Testis (tissue), 5 donors: ENCODE measurements at regions of chr12 and their contacts with region 1.

Region 1: DNA sequence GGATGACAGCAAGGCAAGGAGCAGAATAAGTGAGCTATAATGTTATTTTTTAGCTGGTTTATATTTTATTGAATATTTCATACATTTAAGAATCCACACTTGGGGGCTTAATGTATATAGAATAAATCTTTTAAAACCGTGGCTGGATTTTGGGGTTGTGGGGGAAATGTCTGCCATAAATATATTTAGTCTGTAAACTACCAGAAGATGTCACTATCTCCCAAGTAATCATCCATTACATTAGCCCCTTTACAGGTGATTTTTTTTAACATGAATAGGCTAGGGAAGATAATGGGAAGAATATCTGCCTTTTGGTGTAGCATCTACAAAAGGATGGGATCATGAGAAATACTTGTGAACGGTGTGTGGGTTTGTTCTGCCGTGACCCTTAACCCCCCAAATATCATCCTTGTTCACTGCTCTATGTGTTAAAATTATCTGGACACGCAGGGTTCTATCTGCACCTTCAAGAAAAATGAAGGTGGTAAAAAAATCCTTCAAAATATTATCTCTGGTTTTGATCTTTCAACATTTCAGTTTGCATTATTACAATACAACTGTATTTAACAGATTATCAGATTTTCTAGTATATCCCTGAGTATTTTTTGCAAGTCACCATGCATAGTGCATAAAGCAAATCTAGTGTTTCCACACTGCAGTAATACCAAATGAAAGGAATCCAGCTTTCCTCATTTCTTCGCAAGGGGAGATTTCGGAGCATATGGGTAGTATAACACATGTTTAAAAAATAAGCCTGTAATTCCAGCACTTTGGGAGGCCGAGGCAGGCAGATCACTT is 8.0 kb upstream of the SLC17A8 start:
- DNase-seq: no peak
- H3K4me3 ChIP-seq: no peak overlapping the region
- H3K27ac ChIP-seq: no peak overlapping the region
- H3K4me1 ChIP-seq: no peaks in the 10 kb centered on the region
- H3K27me3 ChIP-seq: no peaks in the 10 kb centered on the region
- CTCF ChIP-seq: peak in 1 of 3 experiments; percentile 18
- POLR2A ChIP-seq: no peak

Region 2: GRCh38 chr12:100391856-100392255 is 43.0 kb after region 1 on chr12:
- intact Hi-C with region 1: no loop called
- DNase-seq: no peak
- H3K4me3 ChIP-seq: no peak overlapping the region
- H3K27ac ChIP-seq: no peak overlapping the region
- H3K4me1 ChIP-seq: no peaks in the 10 kb centered on the region
- H3K27me3 ChIP-seq: no peaks in the 10 kb centered on the region
- CTCF ChIP-seq: no peak
- POLR2A ChIP-seq: no peak

Region 3: GRCh38 chr12:100554608-100555077 is 205.8 kb after region 1 on chr12:
- intact Hi-C with region 1: loop called (anchors 5 kb)
- DNase-seq: no peak
- H3K4me3 ChIP-seq: no peak overlapping the region
- H3K27ac ChIP-seq: no peak overlapping the region
- H3K4me1 ChIP-seq: no peaks in the 10 kb centered on the region
- H3K27me3 ChIP-seq: no peaks in the 10 kb centered on the region
- CTCF ChIP-seq: peak; percentile 94 to 99 (median 96)
- POLR2A ChIP-seq: no peak